CD4-positive, alpha-beta memory T cell (primary cell): ENCODE measurements at regions of chr3 and their contacts with region 1.

Region 1: GRCh38 chr3:136075218-136075808 is 109.8 kb downstream of the PPP2R3A start:
- DNase-seq: peak; percentile 56 to 70 (median 64)
- H3K4me3 ChIP-seq: no peak overlapping the region
- H3K4me3 Mint-ChIP-seq: no peak overlapping the region
- H3K27ac ChIP-seq: no peak overlapping the region
- H3K27ac Mint-ChIP-seq: no peak overlapping the region
- H3K4me1 ChIP-seq: no peaks in the 10 kb centered on the region
- H3K4me1 Mint-ChIP-seq: peaks cover 0 to 4% (median 1%) of the 10 kb centered on the region in 4 donors
- H3K27me3 ChIP-seq: no peaks in the 10 kb centered on the region
- H3K27me3 Mint-ChIP-seq: no peaks in the 10 kb centered on the region

Region 2: GRCh38 chr3:136250226-136250902 is 175.1 kb after region 1 on chr3 and contains the start of gene PCCB:
- CTCF ChIA-PET with region 1: interaction called, 4 read pairs
- POLR2A ChIA-PET with region 1: no interaction called
- intact Hi-C with region 1: loop called (anchors 1 kb)
- DNase-seq: peak; percentile 93 to 96 (median 94)
- H3K4me3 ChIP-seq: peak within 1 kb of the TSS; percentile 43 to 77
- H3K4me3 Mint-ChIP-seq: peak within 1 kb of the TSS; percentile 85 to 93 (median 90)
- H3K27ac ChIP-seq: peak within 1 kb of the TSS; percentile 75
- H3K27ac Mint-ChIP-seq: peak within 1 kb of the TSS; percentile 75 to 94 (median 90)
- H3K4me1 ChIP-seq: peaks cover 17% of the 10 kb centered on the region
- H3K4me1 Mint-ChIP-seq: peaks cover 15 to 27% (median 20%) of the 10 kb centered on the region in 4 donors
- H3K27me3 ChIP-seq: no peaks in the 10 kb centered on the region
- H3K27me3 Mint-ChIP-seq: no peaks in the 10 kb centered on the region
- total RNA-seq, gene PCCB: 12.1 to 12.4 TPM

Region 3: DNA sequence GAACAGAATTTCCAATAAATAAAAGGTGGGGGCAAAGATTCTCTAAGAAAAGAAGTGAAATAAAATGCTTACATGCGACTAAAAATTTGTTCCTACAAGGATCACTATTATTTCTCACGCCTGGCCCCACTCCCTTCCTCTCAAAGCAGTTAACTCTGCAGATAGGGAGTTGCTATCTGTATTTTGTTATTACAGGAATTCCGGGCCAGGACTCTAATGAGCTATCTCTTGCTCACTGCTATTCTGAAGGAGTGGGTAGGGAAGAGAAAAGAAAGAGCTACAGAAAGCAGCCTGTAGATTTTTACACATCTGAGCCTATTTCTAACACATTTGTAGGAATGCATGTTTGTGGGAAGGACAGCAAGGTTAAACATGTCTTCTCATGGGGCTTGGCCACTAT is 315.3 kb after region 1 on chr3:
- CTCF ChIA-PET with region 1: interaction called, 20 read pairs
- POLR2A ChIA-PET with region 1: interaction called, 3 read pairs
- intact Hi-C with region 1: loop called (anchors 1 kb)
- DNase-seq: no peak
- H3K4me3 ChIP-seq: no peak overlapping the region
- H3K4me3 Mint-ChIP-seq: no peak overlapping the region
- H3K27ac ChIP-seq: no peak overlapping the region
- H3K27ac Mint-ChIP-seq: no peak overlapping the region
- H3K4me1 ChIP-seq: no peaks in the 10 kb centered on the region
- H3K4me1 Mint-ChIP-seq: peaks cover 0 to 2% (median 0%) of the 10 kb centered on the region in 4 donors
- H3K27me3 ChIP-seq: no peaks in the 10 kb centered on the region
- H3K27me3 Mint-ChIP-seq: no peaks in the 10 kb centered on the region

Region 4: GRCh38 chr3:137032465-137033120 is 957.3 kb after region 1 on chr3:
- CTCF ChIA-PET with region 1: interaction called, 3 read pairs
- POLR2A ChIA-PET with region 1: no interaction called
- intact Hi-C with region 1: loop called (anchors 1 kb)
- DNase-seq: peak; percentile 37 to 67 (median 49)
- H3K4me3 ChIP-seq: peak overlapping the region in 1 of 2 donors; percentile 11
- H3K4me3 Mint-ChIP-seq: peak overlapping the region; percentile 71 to 85 (median 76)
- H3K27ac ChIP-seq: no peak overlapping the region
- H3K27ac Mint-ChIP-seq: no peak overlapping the region
- H3K4me1 ChIP-seq: peaks cover 5% of the 10 kb centered on the region
- H3K4me1 Mint-ChIP-seq: peaks cover 4 to 9% (median 7%) of the 10 kb centered on the region in 4 donors
- H3K27me3 ChIP-seq: no peaks in the 10 kb centered on the region
- H3K27me3 Mint-ChIP-seq: peaks cover 18 to 19% of the 10 kb centered on the region in 2 donors

Region 5: GRCh38 chr3:137105277-137105977 is 1030.1 kb after region 1 on chr3:
- CTCF ChIA-PET with region 1: no interaction called
- POLR2A ChIA-PET with region 1: no interaction called
- intact Hi-C with region 1: loop called (anchors 2 kb)
- DNase-seq: peak in 4 of 5 donors; percentile 19 to 35 (median 32)
- H3K4me3 ChIP-seq: no peak overlapping the region
- H3K4me3 Mint-ChIP-seq: no peak overlapping the region
- H3K27ac ChIP-seq: no peak overlapping the region
- H3K27ac Mint-ChIP-seq: no peak overlapping the region
- H3K4me1 ChIP-seq: no peaks in the 10 kb centered on the region
- H3K4me1 Mint-ChIP-seq: no peaks in the 10 kb centered on the region
- H3K27me3 ChIP-seq: no peaks in the 10 kb centered on the region
- H3K27me3 Mint-ChIP-seq: peaks cover 16 to 24% of the 10 kb centered on the region in 2 donors